HCT116 (cell line): ENCODE measurements at regions of chr10 and their contacts with region 1.

Region 1: DNA sequence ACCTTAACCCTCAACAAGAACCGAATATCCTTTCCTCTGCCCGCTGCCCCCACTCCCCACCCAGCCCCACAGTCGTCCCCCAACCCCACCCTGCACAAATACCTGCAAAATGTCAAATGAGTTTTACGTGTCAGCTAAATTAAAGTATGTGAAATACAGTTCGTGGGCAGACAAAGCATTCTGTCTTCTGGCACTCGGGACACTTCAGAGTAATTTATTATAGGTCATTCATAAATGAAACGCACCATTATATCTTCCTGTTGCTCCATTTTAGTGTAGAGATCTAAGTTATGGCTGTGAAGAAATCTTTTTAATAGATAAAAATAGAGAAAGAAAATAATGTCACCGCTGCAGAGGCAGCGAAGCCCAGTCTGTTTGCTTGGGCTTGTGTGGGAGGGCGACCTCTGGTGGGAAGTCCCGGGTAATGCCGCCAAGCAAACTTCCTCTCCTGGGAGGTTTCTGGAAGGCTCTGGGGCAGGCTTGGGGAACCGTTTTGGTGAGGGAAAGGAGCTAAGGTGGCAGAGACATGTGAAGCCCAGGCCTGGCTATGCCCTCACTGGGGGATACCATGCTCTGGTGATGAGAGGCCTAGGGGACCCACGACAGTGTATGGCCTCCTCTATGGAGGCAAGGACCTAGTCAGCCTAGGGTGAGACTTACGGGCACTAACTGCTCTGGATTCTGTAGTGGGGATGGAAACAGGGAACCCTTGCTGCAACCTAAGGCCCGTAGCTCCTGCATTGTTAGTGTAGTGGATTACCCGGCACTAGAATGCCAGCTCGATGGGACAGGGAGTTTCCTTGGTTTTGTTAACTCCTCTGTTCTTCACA is 604.9 kb downstream of the LRMDA start:
- DNase-seq: peak; percentile 26
- ATAC-seq: peak; percentile 95
- H3K4me3 ChIP-seq: no peak overlapping the region
- H3K27ac ChIP-seq: no peak overlapping the region
- H3K4me1 ChIP-seq: peaks cover 0 to 8% of the 10 kb centered on the region in 2 experiments; a peak in 1 of 4 replicates
- H3K27me3 ChIP-seq: peaks cover under 1% of the 10 kb centered on the region; the same call in 1 of the 2 replicates
- CTCF ChIP-seq: peak; percentile 64 to 90 (median 84); a peak in 5 of 6 replicates
- POLR2A ChIP-seq: no peak
- RAD21 ChIP-seq: peak; percentile 81

Region 2: GRCh38 chr10:75395066-75395931 is 641.0 kb before region 1 on chr10:
- CTCF ChIA-PET with region 1: interaction called, 26 read pairs
- POLR2A ChIA-PET with region 1: no interaction called
- RAD21 ChIA-PET with region 1: interaction called in 1 of 2 experiments, 3 read pairs
- intact Hi-C with region 1: loop called (anchors 1 kb)
- DNase-seq: no peak
- ATAC-seq: peak; percentile 65
- H3K4me3 ChIP-seq: peak overlapping the region; percentile 71 to 81
- H3K27ac ChIP-seq: peak overlapping the region; percentile 93
- H3K4me1 ChIP-seq: peaks cover 15 to 37% of the 10 kb centered on the region in 2 experiments; a peak in 3 of 4 replicates
- H3K27me3 ChIP-seq: no peaks in the 10 kb centered on the region
- CTCF ChIP-seq: peak in 2 of 3 experiments; percentile 80 to 89; a peak in 4 of 6 replicates
- POLR2A ChIP-seq: peak; percentile 35
- RAD21 ChIP-seq: no peak

Region 3: DNA sequence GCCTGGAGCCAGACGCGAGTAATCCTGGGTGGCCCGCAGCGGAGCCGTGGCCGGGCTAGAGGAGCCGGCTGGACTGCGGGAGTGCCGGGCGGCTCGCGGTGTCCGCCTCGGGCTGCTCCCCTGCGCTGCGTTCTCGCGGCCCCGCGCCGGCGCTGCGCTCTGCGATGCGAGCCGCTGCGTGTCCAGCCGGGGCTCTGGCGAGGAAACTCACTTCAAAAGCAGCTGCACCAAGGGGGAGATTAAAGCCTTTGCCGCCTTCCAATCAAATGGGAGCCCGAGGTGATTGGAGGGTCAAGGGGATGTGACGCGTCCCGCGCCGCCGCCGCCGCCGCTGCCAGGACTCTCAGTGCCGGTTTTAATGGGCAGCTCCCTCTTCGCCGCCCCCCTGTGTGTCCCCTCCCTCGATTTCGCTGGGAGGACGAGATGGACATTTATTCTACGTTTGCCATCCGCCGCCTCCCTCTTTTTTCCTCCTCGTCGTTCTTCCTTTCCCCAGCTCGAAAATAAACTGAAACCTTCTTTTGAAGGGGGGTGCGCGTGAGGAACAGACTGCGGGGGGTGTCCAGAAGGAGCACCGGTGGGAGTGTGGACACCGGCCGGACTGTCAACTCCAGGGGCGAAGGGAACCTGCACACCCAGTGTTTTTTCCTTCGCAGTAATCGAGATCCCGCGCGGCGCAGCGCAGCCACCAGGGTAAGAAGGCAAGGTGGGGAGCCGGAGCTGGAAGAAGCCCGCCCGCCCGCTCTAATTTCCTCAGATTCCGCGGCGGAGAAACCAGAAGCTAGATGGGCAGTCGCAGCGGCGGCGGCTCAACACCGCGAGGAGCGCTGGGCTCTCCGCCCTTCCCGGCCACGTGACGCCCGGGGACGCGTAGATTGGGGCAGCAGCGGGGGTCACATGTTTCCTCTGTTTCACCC is 634.5 kb before region 1 on chr10 and contains the start of gene ZNF503:
- CTCF ChIA-PET with region 1: interaction called, 21 read pairs
- POLR2A ChIA-PET with region 1: interaction called, 17 read pairs
- RAD21 ChIA-PET with region 1: interaction called in 1 of 2 experiments, 3 read pairs
- intact Hi-C with region 1: loop called (anchors 1 kb)
- DNase-seq: peak; percentile 94
- ATAC-seq: peak; percentile 67
- H3K4me3 ChIP-seq: peak within 1 kb of the TSS; percentile 93 to 96
- H3K27ac ChIP-seq: peak within 1 kb of the TSS; percentile 97
- H3K4me1 ChIP-seq: peaks cover 27 to 64% of the 10 kb centered on the region in 2 experiments; a peak in 3 of 4 replicates
- H3K27me3 ChIP-seq: no peaks in the 10 kb centered on the region
- CTCF ChIP-seq: peak in 1 of 3 experiments; percentile 14; a peak in 1 of 6 replicates
- POLR2A ChIP-seq: peak; percentile 77
- RAD21 ChIP-seq: no peak
- total RNA-seq, gene ZNF503: 30.4 TPM

Region 4: GRCh38 chr10:76086761-76087639 is 50.7 kb after region 1 on chr10:
- CTCF ChIA-PET with region 1: interaction called, 14 read pairs
- POLR2A ChIA-PET with region 1: no interaction called
- RAD21 ChIA-PET with region 1: no interaction called
- intact Hi-C with region 1: no loop called
- DNase-seq: no peak
- ATAC-seq: peak; percentile 83
- H3K4me3 ChIP-seq: no peak overlapping the region
- H3K27ac ChIP-seq: no peak overlapping the region
- H3K4me1 ChIP-seq: peaks cover 16 to 31% of the 10 kb centered on the region in 2 experiments
- H3K27me3 ChIP-seq: peaks cover 9% of the 10 kb centered on the region
- CTCF ChIP-seq: peak; percentile 58 to 82 (median 81); a peak in 5 of 6 replicates
- POLR2A ChIP-seq: no peak
- RAD21 ChIP-seq: peak; percentile 86

Region 5: GRCh38 chr10:76202777-76203176 is 166.5 kb after region 1 on chr10:
- CTCF ChIA-PET with region 1: no interaction called
- POLR2A ChIA-PET with region 1: no interaction called
- RAD21 ChIA-PET with region 1: no interaction called
- intact Hi-C with region 1: no loop called
- DNase-seq: no peak
- ATAC-seq: no peak
- H3K4me3 ChIP-seq: no peak overlapping the region
- H3K27ac ChIP-seq: no peak overlapping the region
- H3K4me1 ChIP-seq: peaks cover 0 to 8% of the 10 kb centered on the region in 2 experiments; a peak in 2 of 4 replicates
- H3K27me3 ChIP-seq: peaks cover 7% of the 10 kb centered on the region; the same call in 1 of the 2 replicates
- CTCF ChIP-seq: no peak
- POLR2A ChIP-seq: no peak
- RAD21 ChIP-seq: no peak

Region 6: GRCh38 chr10:76303682-76304316 is 267.5 kb after region 1 on chr10:
- CTCF ChIA-PET with region 1: interaction called, 17 read pairs
- POLR2A ChIA-PET with region 1: no interaction called
- RAD21 ChIA-PET with region 1: interaction called in 1 of 2 experiments, 4 read pairs
- intact Hi-C with region 1: loop called (anchors 2 kb)
- DNase-seq: peak; percentile 28
- ATAC-seq: peak; percentile 92
- H3K4me3 ChIP-seq: no peak overlapping the region
- H3K27ac ChIP-seq: no peak overlapping the region
- H3K4me1 ChIP-seq: no peaks in the 10 kb centered on the region
- H3K27me3 ChIP-seq: peaks cover 14% of the 10 kb centered on the region; the same call in 1 of the 2 replicates
- CTCF ChIP-seq: peak; percentile 29 to 55 (median 45); a peak in 4 of 6 replicates
- POLR2A ChIP-seq: no peak
- RAD21 ChIP-seq: peak; percentile 69

Region 7: DNA sequence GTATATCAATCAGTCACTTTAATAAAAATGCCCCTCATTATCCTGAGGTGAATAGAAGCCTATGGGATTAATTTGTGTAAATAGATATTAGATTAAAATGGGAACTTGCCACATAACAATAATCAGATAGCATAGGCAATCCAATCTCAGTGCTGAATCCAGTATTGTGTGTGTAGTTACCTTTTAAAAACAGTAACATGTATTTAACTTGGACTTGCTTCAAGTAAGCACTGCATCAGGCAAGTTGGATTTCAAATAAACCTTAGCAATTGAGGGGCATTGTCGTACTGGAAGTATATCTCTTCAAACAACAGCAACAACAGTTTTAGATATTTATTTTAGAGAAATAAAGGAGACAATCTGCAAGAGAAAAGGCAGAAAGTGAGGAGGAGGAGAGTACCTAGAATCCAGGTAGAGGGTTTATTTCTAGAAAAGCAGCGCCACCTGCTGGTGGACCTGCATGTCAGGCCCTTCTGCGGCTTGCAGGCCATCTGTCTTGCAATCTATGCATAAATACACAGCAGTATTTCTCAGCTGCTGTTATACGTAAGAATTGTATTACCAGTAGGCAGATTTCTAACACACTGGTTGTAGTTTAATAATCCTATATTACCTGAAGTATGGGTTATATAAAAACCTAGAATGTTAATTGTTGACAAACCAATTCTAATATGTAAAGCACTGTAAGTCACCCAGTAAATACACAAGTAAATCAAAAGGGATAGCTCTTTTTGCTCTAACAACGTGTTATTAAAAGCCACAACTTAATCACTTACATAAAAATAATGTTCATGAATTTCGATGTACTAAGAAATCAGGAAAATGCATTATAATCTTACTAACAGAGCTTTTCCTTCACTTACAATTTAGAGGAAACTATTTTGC is 948.5 kb after region 1 on chr10:
- CTCF ChIA-PET with region 1: no interaction called
- POLR2A ChIA-PET with region 1: no interaction called
- RAD21 ChIA-PET with region 1: no interaction called
- intact Hi-C with region 1: loop called (anchors 10 kb)
- DNase-seq: peak; percentile 63
- ATAC-seq: peak; percentile 93
- H3K4me3 ChIP-seq: no peak overlapping the region
- H3K27ac ChIP-seq: no peak overlapping the region
- H3K4me1 ChIP-seq: no peaks in the 10 kb centered on the region
- H3K27me3 ChIP-seq: peaks cover 65% of the 10 kb centered on the region
- CTCF ChIP-seq: peak; percentile 48 to 92 (median 87); a peak in 5 of 6 replicates
- POLR2A ChIP-seq: no peak
- RAD21 ChIP-seq: peak; percentile 71

Region 8: DNA sequence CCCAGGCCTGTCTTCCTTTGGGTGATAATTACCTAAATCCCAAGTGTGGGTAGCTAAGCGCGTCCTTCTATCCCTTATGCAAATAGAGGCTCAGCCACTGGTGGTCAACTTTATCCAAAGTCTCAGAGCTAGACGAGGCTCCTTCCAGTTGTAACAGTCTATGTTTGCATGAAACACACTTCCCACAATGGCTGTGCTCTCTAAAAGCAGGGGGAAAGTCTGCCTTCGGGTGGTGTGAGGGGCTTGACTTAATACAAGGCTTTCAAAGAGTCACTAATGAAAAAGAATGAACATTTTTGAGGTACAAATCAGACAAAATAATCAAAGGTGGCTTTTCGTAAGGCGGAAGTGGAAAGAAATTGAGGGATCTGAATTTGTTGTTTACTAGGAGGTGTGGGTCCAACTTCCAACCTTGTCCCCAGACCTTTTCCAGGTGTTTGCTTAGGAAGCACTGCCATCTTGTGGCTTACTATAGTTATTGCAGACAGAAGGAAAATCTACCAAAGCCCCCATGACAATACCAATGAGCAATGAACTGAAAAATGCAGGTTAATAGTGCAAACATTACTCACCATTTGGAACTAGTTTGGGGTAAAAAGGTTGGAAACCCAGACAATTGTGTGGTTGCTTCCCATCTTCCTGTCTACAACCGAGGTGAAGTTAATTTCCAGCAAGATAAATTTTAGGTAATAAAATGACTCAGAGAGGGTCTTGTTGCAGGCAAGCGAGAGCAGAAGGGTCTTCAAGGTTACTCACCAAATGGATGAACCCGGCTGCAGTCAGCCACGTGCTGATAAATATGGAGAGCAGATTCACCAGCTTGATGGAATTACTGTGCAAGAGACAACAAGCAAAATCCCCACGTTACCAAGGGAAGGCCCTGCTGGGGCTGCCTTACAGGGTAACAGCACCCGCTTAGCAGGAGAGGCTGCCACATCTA is 1075.6 kb after region 1 on chr10:
- CTCF ChIA-PET with region 1: no interaction called
- POLR2A ChIA-PET with region 1: no interaction called
- RAD21 ChIA-PET with region 1: no interaction called
- intact Hi-C with region 1: loop called (anchors 5 kb)
- DNase-seq: peak; percentile 16
- ATAC-seq: peak; percentile 86
- H3K4me3 ChIP-seq: no peak overlapping the region
- H3K27ac ChIP-seq: no peak overlapping the region
- H3K4me1 ChIP-seq: no peaks in the 10 kb centered on the region
- H3K27me3 ChIP-seq: peaks cover 12% of the 10 kb centered on the region
- CTCF ChIP-seq: peak; percentile 46 to 83 (median 72); a peak in 5 of 6 replicates
- POLR2A ChIP-seq: no peak
- RAD21 ChIP-seq: peak; percentile 83